Activated CD4-positive, alpha-beta T cell treated with anti-CD3 and anti-CD28 coated beads for 36 hours (primary cell): ENCODE measurements at regions of chr1 and their contacts with region 1.

Region 1: DNA sequence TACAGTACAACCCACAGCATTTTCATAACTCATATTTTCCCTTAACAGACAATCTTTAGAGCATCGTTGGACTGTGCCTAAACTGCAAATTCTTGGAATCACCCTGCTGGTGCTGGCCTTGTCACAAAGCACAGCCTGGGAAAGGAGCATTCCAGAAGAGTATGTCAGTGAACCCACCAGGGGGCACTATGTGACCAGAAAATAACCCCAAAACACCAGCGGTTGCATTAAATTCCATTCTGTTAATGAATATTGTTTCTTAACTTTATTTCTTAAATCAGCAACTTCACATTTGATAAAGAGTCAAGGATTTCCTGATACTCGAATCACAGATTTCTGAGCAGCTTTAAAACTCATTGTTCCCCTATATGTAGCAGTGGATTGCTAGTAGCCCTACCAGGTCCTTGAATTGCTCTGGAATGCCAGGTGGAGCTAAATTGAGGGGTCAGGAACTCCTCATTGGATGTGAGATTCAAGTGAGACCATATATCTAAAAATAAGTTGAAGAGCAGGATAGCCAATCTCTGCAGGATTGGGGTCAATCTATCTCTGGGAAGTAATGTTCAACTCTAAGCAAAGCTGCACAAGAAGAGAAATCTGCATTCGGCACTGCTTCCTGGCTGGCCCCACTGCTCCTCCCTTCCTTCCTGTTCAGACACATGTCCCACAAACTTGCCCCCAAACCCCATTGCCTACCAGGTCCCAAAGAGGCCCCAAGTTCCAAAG is 12.7 kb upstream of the RAB4A start:
- DNase-seq: peak; percentile 74
- ATAC-seq: no peak
- H3K4me3 Mint-ChIP-seq: no peak overlapping the region
- H3K27ac Mint-ChIP-seq: no peak overlapping the region
- H3K4me1 Mint-ChIP-seq: peaks cover 32% of the 10 kb centered on the region
- H3K27me3 Mint-ChIP-seq: no peaks in the 10 kb centered on the region

Region 2: DNA sequence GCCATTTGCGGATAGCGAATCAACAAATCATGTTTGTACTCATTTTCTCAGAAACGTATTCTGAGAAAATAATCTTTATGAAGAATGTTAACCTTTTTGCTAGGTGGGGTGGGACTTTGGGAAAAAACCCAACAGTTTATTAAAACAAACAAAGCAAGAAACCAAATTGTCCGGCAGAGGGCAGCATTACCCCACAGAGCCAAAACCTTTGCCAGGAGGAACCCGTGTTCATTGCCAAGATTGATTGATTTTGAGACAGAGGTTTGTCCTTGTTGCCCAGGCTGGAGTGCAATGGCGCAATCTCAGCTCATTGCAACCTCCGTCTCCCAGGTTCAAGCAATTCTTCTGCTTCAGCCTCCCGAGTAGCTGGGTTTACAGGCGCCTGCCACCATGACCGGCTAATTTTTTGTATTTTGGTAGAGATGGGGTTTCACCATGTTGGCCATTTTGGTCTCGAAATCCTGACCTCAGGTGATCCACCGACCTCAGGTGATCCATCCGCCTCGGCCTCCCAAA is 593.7 kb before region 1 on chr1:
- CTCF ChIA-PET with region 1: interaction called, 15 read pairs
- POLR2A ChIA-PET with region 1: no interaction called
- intact Hi-C with region 1: loop called (anchors 1 to 5 kb)
- DNase-seq: peak; percentile 87
- ATAC-seq: peak; percentile 53
- H3K4me3 Mint-ChIP-seq: no peak overlapping the region
- H3K27ac Mint-ChIP-seq: no peak overlapping the region
- H3K4me1 Mint-ChIP-seq: no peaks in the 10 kb centered on the region
- H3K27me3 Mint-ChIP-seq: peaks cover 2% of the 10 kb centered on the region

Region 3: GRCh38 chr1:228727681-228728171 is 530.5 kb before region 1 on chr1:
- CTCF ChIA-PET with region 1: no interaction called
- POLR2A ChIA-PET with region 1: interaction called, 11 read pairs
- intact Hi-C with region 1: no loop called
- DNase-seq: no peak
- ATAC-seq: no peak
- H3K4me3 Mint-ChIP-seq: no peak overlapping the region
- H3K27ac Mint-ChIP-seq: no peak overlapping the region
- H3K4me1 Mint-ChIP-seq: no peaks in the 10 kb centered on the region
- H3K27me3 Mint-ChIP-seq: peaks cover 10% of the 10 kb centered on the region

Region 4: DNA sequence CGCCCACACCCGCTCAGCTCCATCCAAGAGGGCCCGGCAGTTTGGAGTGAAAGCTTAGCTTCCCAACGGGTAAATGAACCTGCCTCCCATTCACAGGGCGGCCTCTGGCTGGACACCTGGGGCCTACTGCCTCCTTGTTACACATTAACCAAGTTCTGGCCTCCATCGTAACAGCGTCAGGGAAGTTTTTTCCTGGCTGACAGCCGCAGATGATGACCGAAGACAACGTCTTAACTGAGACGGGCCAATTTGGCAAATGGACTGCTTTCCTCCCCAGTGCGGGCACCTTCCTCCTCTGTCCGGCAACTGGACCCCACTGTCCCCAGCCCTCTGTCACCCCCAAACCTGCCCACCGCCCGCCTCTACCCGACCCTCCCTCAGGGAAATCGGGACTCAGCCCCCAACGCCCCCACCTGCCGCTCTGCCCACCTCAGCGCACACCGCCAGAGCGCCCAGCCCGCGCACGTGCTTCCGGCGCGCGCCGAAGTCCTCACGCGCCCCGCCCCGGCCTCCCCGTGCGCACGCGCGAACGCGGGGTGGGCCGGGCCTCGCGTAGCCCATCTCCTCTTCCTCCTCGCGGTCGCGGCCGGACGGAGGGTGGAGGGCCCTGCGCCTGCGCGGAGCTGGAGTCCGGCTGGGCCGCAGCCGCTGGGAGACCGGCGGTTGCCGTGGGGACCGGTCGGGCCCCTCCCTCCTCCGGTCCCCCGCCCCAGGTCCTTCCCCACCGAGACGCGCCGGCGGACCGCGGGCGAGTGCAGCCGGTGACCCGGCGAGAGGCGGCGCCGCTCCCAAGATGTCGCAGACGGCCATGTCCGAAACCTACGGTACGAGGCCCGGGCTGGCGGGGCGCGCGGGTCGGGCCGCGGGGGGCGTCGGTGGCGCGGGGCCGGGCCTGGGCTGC is 12.6 kb after region 1 on chr1 and contains the start of gene RAB4A:
- CTCF ChIA-PET with region 1: interaction called, 10 read pairs
- POLR2A ChIA-PET with region 1: interaction called, 4 read pairs
- intact Hi-C with region 1: no loop called
- DNase-seq: peak; percentile 84
- ATAC-seq: peak; percentile 87
- H3K4me3 Mint-ChIP-seq: peak within 1 kb of the TSS; percentile 82
- H3K27ac Mint-ChIP-seq: peak within 1 kb of the TSS; percentile 71
- H3K4me1 Mint-ChIP-seq: peaks cover 31% of the 10 kb centered on the region
- H3K27me3 Mint-ChIP-seq: no peaks in the 10 kb centered on the region
- total RNA-seq, gene RAB4A: 22.1 to 24.0 TPM

Region 5: GRCh38 chr1:229440851-229441537 is 182.8 kb after region 1 on chr1:
- CTCF ChIA-PET with region 1: interaction called, 12 read pairs
- POLR2A ChIA-PET with region 1: interaction called, 3 read pairs
- intact Hi-C with region 1: loop called (anchors 1 to 2 kb)
- DNase-seq: peak; percentile 20
- ATAC-seq: peak; percentile 94
- H3K4me3 Mint-ChIP-seq: no peak overlapping the region
- H3K27ac Mint-ChIP-seq: peak overlapping the region; percentile 52
- H3K4me1 Mint-ChIP-seq: peaks cover 23% of the 10 kb centered on the region
- H3K27me3 Mint-ChIP-seq: peaks cover 11% of the 10 kb centered on the region

Region 6: DNA sequence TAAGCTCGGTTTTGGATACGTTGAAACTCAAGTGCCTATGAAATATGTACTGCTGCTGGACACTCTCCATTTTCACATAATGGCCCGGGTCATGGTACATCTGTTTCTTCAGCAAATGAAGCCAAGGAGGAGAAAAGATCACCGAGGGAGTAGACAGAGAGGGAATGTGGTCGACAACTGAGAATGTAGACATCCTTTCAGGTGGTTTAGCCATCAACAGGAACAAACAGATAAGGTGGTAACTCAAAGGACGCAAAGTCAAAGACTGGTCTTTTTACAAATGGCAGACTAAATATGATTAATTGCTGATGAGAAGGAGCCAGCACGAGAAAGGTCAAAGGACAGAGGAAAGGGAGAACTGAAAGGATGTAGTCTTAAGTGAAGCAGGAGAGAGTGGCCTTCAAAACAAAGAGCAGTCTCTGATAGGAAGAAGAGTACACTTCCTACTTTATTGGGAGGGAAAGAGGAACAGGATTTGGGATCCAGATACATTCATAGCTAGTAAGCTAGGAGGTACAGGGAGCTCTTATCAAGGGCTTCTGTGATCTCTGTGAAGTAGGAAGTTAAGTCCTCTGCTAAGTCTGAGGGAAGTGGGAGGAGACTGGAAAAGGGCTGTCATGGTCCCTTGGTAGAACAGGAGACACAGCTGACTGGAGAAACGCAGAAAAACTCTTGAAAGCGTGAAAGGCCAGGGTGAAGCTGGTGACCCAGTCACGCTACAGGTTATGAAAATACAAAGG is 221.6 kb after region 1 on chr1:
- CTCF ChIA-PET with region 1: interaction called, 88 read pairs
- POLR2A ChIA-PET with region 1: no interaction called
- intact Hi-C with region 1: loop called (anchors 1 kb)
- DNase-seq: no peak
- ATAC-seq: no peak
- H3K4me3 Mint-ChIP-seq: no peak overlapping the region
- H3K27ac Mint-ChIP-seq: no peak overlapping the region
- H3K4me1 Mint-ChIP-seq: peaks cover 3% of the 10 kb centered on the region
- H3K27me3 Mint-ChIP-seq: no peaks in the 10 kb centered on the region

Region 7: GRCh38 chr1:229625915-229626831 is 368.0 kb after region 1 on chr1 and contains the starts of genes TAF5L and URB2:
- CTCF ChIA-PET with region 1: no interaction called
- POLR2A ChIA-PET with region 1: no interaction called
- intact Hi-C with region 1: loop called in 1 of 2 experiments (anchors 10 kb)
- DNase-seq: peak; percentile 93
- ATAC-seq: peak; percentile 92
- H3K4me3 Mint-ChIP-seq: peak within 1 kb of the TSS; percentile 89
- H3K27ac Mint-ChIP-seq: peak within 1 kb of the TSS; percentile 96
- H3K4me1 Mint-ChIP-seq: peaks cover 57% of the 10 kb centered on the region
- H3K27me3 Mint-ChIP-seq: no peaks in the 10 kb centered on the region
- total RNA-seq, gene TAF5L: 16.5 to 17.6 TPM
- total RNA-seq, gene URB2: 13.9 to 16.5 TPM